ENCODE measurements at regions of chr10 and their contacts with region 1.

Region 1: GRCh38 chr10:44386546-44387052 is 1.7 kb upstream of the CXCL12 start:
- DNase-seq: peak; percentile 65 to 86 (median 75)
- ATAC-seq: peak; percentile 52 to 86 (median 83)
- H3K4me3 ChIP-seq: peak overlapping the region in 4 of 12 donors; percentile 14 to 87 (median 30)
- H3K27ac ChIP-seq: peak overlapping the region in 3 of 12 donors; percentile 79 to 89 (median 82)
- H3K4me1 ChIP-seq: peaks cover 0 to 49% (median 20%) of the 10 kb centered on the region in 12 donors
- H3K27me3 ChIP-seq: peaks cover 0 to 26% (median 0%) of the 10 kb centered on the region in 9 donors
- CTCF ChIP-seq: peak; percentile 82 to 95 (median 92)
- POLR2A ChIP-seq: no peak

Region 2: GRCh38 chr10:43793704-43794103 is 592.9 kb before region 1 on chr10:
- intact Hi-C with region 1: loop called in 1 of 10 experiments (anchors 10 kb)
- DNase-seq: no peak
- ATAC-seq: no peak
- H3K4me3 ChIP-seq: no peak overlapping the region
- H3K27ac ChIP-seq: no peak overlapping the region
- H3K4me1 ChIP-seq: peaks cover 0 to 12% (median 0%) of the 10 kb centered on the region in 12 donors
- H3K27me3 ChIP-seq: no peaks in the 10 kb centered on the region
- CTCF ChIP-seq: no peak
- POLR2A ChIP-seq: no peak

Region 3: DNA sequence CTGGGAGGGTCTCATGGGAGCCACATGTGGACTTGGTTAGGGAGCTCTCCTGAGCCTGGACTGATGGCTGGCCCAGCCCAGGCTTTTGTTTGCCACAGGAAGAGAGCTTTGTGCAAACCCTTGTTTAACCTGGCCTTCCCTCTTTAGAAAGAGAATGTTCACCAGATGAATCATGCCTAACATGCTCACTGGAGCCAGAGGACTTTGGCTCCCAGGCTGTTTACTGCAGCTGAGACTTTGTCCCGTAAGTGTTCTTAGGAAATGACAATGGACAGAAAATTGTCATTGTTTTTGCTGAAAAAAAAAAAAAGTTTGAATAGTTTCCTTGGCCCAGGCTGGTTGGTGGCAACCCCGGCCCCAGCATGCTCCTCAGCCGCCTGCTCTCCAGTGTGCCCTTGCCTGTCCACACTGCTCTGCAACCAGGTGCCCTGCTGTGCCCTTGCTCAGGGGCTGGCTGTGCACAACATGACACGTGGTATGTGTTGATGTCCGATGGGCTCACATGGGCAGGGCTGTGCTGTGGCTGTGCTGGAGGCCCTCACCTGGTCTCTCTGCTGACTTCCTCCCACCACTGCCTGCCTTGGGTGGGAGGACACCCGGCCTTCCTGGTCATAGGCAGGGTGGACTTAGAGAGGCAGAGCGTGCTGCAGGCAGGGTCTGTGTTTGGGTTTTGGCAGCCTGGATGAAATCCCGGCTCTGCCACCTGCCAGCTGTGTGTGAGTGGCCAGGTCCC is 522.6 kb before region 1 on chr10:
- intact Hi-C with region 1: loop called in 1 of 10 experiments (anchors 10 kb)
- DNase-seq: peak in 4 of 5 donors; percentile 49 to 70 (median 66)
- ATAC-seq: peak; percentile 66 to 85 (median 84)
- H3K4me3 ChIP-seq: no peak overlapping the region
- H3K27ac ChIP-seq: peak overlapping the region; percentile 70 to 92 (median 84)
- H3K4me1 ChIP-seq: peaks cover 12 to 69% (median 38%) of the 10 kb centered on the region in 12 donors
- H3K27me3 ChIP-seq: no peaks in the 10 kb centered on the region
- CTCF ChIP-seq: no peak
- POLR2A ChIP-seq: no peak

Region 4: GRCh38 chr10:43922335-43923280 is 464.0 kb before region 1 on chr10:
- intact Hi-C with region 1: loop called in 4 of 10 experiments (anchors 10 kb)
- DNase-seq: no peak
- ATAC-seq: peak in 3 of 4 donors; percentile 28 to 68 (median 31)
- H3K4me3 ChIP-seq: no peak overlapping the region
- H3K27ac ChIP-seq: no peak overlapping the region
- H3K4me1 ChIP-seq: peaks cover 0 to 15% (median 0%) of the 10 kb centered on the region in 12 donors
- H3K27me3 ChIP-seq: no peaks in the 10 kb centered on the region
- CTCF ChIP-seq: peak in 5 of 12 donors; percentile 5 to 27 (median 23)
- POLR2A ChIP-seq: no peak

Region 5: GRCh38 chr10:44051584-44052385 is 334.8 kb before region 1 on chr10:
- intact Hi-C with region 1: loop called in 2 of 10 experiments (anchors 10 kb)
- DNase-seq: no peak
- ATAC-seq: peak in 1 of 4 donors; percentile 34
- H3K4me3 ChIP-seq: no peak overlapping the region
- H3K27ac ChIP-seq: no peak overlapping the region
- H3K4me1 ChIP-seq: peaks cover 0 to 6% (median 0%) of the 10 kb centered on the region in 12 donors
- H3K27me3 ChIP-seq: no peaks in the 10 kb centered on the region
- CTCF ChIP-seq: no peak
- POLR2A ChIP-seq: no peak

Region 6: DNA sequence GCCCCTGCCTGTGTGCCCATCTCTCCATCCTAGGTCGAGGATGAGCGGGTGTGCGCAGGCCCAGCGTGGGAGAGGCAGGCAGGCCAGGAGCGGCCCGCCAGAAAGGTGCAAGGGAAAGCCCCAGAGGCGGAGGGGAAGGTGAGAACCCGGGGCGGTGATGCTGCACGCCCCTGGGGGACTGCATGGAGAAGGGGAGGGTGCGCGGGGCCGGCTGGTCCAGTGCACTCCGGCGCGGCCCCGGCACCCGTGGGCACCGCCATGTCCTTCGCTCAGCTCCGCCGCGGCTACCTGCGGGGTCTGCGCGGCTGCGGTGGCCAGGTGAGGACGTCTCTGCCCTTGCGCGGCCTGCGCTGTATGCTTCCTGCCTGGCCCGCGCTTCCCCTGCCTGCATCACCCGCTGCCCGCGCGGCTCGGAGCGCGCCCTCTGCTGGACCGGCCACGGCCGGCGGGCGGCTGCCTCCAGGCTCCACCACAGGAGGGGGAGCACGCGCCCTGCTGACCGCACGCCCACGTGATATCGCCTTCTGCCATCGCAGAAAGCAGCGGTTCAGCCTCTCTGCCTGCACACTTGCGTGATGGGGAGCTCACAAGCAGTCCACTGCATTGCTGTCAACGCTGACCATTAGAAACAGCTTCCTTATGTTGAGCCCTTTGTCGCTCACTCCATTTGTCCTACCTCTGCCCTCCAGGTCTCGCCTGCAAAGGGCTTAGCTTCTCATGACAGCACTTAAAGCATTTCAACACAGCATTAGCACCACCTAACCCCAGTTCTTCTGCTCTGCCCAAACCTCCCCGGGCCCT is 75.6 kb before region 1 on chr10:
- intact Hi-C with region 1: loop called in 9 of 10 experiments (anchors 2 to 5 kb)
- DNase-seq: peak; percentile 88 to 93 (median 90)
- ATAC-seq: peak; percentile 84 to 99 (median 97)
- H3K4me3 ChIP-seq: peak overlapping the region in 10 of 12 donors; percentile 38 to 60 (median 50)
- H3K27ac ChIP-seq: peak overlapping the region in 6 of 12 donors; percentile 18 to 73 (median 48)
- H3K4me1 ChIP-seq: peaks cover 0 to 12% (median 10%) of the 10 kb centered on the region in 12 donors
- H3K27me3 ChIP-seq: no peaks in the 10 kb centered on the region
- CTCF ChIP-seq: peak; percentile 79 to 100 (median 98)
- POLR2A ChIP-seq: no peak

Region 7: GRCh38 chr10:44864637-44865288 is 478.2 kb after region 1 on chr10:
- intact Hi-C with region 1: loop called in 9 of 10 experiments (anchors 2 to 5 kb)
- DNase-seq: peak; percentile 89 to 95 (median 91)
- ATAC-seq: peak; percentile 93 to 97 (median 96)
- H3K4me3 ChIP-seq: peak overlapping the region; percentile 16 to 63 (median 52)
- H3K27ac ChIP-seq: peak overlapping the region in 10 of 12 donors; percentile 4 to 68 (median 56)
- H3K4me1 ChIP-seq: peaks cover 0 to 37% (median 14%) of the 10 kb centered on the region in 12 donors
- H3K27me3 ChIP-seq: peaks cover 0 to 12% (median 0%) of the 10 kb centered on the region in 9 donors
- CTCF ChIP-seq: peak in 11 of 12 donors; percentile 95 to 99 (median 97)
- POLR2A ChIP-seq: peak in 1 of 2 donors; percentile 11

Measured in heart left ventricle (tissue), 16 donors.